ENCODE measurements at regions of chr3 and their contacts with region 1.

Region 1: DNA sequence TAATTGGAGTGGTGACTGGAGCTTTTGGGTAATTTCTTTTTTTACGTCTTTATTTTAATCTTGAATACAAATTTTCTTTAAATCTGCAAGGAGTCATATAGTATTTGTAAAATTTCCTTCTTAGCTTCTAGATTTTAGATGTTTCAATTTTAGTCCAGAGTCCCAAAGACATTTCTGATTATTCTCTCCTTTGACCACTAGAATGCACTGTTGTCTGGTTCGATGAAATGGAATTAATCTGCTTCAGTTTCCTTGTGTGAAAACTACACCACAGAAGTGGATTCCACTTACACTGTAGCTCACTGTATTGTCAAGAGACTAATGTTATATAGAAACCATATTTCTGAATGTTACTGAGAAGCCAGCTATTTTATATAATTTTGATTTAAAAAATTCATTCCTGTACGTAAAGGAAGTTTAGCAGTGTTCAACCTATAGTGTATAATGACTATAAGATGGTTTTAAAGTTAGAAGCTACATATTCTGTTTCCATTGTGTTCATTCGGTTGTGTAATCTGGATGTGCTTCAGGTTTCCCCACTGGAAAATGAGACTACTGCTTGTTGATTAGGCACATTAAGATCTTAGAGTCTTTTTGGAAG is 6.1 kb downstream of the GRAMD1C start:
- DNase-seq: no peak
- H3K4me3 ChIP-seq: no peak overlapping the region
- H3K27ac ChIP-seq: no peak overlapping the region
- H3K27me3 ChIP-seq: no peaks in the 10 kb centered on the region
- CTCF ChIP-seq: peak; percentile 71

Region 2: GRCh38 chr3:113736548-113737089 is 108.1 kb before region 1 on chr3:
- CTCF ChIA-PET with region 1: interaction called, 40 read pairs
- POLR2A ChIA-PET with region 1: no interaction called
- DNase-seq: peak; percentile 43
- H3K4me3 ChIP-seq: no peak overlapping the region
- H3K27ac ChIP-seq: no peak overlapping the region
- H3K27me3 ChIP-seq: no peaks in the 10 kb centered on the region
- CTCF ChIP-seq: peak; percentile 64

Region 3: DNA sequence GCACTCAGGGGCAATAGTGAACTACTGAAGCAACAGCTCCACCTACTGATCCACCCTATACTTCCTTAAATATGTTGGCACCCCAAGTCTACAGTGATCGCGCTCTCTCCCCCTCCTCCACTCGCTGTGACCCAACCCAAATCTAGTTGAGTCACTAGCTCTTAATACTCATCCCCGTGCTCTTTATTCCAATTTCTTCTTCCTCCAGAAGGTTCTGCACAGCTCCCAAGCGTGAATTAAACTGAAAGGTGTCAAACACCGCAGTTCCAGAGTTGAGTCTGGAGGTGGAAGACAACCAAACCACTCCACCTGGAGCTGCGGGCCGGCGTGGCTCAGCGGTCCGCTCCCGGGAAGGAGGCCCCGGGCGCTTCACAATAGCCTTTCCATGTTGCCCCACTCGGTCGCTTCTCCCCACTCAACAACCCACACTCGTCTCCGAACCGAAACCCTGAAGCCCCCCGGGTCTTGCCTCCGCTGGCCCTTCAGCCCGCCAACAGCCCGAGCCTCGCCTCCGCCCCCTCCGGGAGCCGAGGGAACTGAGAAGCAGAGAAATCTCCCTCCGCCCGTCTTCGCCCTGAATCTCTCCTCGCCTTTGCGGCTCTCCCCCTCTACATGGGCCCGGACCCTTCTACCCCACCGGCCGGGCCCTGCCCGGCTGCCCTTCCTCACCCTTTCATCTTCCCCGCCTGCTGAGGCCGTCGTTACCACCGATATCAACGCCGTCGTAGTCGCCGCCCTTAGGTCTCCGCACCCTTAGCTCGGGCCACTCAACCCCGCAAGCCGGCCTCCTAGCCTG is 99.3 kb before region 1 on chr3:
- CTCF ChIA-PET with region 1: interaction called, 13 read pairs
- POLR2A ChIA-PET with region 1: no interaction called
- DNase-seq: peak; percentile 65
- H3K4me3 ChIP-seq: peak overlapping the region; percentile 98
- H3K27ac ChIP-seq: peak overlapping the region; percentile 96
- H3K27me3 ChIP-seq: no peaks in the 10 kb centered on the region
- CTCF ChIP-seq: peak; percentile 70

Region 4: GRCh38 chr3:113906568-113907140 is 61.9 kb after region 1 on chr3:
- CTCF ChIA-PET with region 1: interaction called, 16 read pairs
- POLR2A ChIA-PET with region 1: no interaction called
- DNase-seq: no peak
- H3K4me3 ChIP-seq: no peak overlapping the region
- H3K27ac ChIP-seq: no peak overlapping the region
- H3K27me3 ChIP-seq: no peaks in the 10 kb centered on the region
- CTCF ChIP-seq: no peak

Region 5: DNA sequence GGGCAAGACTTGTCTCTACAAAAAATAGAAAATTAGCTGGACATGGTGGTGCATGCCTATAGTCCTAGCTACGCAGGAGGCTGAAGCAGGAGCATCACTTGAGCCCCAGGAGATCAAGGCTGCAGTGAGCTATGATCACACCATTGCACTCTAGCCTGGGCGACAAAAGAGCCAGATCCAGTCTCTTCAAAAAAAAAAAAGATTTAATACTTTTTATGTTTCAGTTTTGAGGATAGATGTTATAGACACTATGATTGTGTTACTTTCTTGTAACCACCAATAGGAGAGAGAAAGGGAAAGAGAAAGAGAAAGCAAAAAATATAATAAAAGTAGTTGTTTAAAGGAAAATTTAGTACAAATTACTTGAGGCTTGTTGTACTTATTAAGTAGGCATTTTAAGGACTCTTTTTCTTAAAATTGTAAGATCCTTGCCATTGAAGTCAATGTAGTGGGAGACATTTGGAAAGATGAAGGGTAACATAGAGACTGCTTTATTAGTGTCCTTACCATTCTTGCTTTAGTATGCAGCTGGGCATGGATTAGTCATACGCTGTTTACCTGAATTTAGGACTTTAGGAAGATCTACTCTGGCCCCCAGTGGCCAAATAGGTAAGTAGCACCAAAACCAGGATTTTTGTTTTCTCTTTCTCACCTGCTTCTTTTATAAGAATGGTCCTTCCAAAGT is 68.0 kb after region 1 on chr3:
- CTCF ChIA-PET with region 1: interaction called, 51 read pairs
- POLR2A ChIA-PET with region 1: no interaction called
- DNase-seq: peak; percentile 32
- H3K4me3 ChIP-seq: no peak overlapping the region
- H3K27ac ChIP-seq: no peak overlapping the region
- H3K27me3 ChIP-seq: no peaks in the 10 kb centered on the region
- CTCF ChIP-seq: peak; percentile 76

Region 6: DNA sequence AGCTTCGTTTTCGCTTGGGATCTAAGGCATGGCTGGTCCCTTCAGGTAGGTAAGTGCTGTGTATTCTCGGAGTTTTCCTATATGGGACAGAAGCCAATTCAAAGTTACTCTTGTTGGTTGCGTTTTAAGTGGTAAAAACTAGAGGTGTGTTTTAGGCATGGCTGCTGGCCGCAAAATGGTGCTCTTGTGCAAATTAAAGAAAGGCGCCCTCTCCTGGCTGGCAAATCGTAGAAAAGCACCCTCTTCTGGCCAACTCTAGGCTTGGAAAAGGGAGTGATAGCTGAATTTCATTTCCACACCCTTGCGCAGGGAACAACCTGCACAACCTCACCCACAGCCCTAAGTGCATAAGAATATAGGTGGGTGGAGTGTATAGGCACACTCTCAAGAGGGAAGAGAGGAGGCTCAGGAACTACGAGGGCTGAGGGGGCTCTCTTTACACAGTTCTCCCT is 310.7 kb after region 1 on chr3:
- CTCF ChIA-PET with region 1: interaction called, 24 read pairs
- POLR2A ChIA-PET with region 1: no interaction called
- DNase-seq: no peak
- H3K4me3 ChIP-seq: no peak overlapping the region
- H3K27ac ChIP-seq: no peak overlapping the region
- H3K27me3 ChIP-seq: peaks cover 13% of the 10 kb centered on the region
- CTCF ChIP-seq: peak; percentile 55